Activated CD8-positive, alpha-beta T cell treated with anti-CD3 and anti-CD28 coated beads, Interleukin-2, amount 10 ng/mL, durations not matched to agents 7 days and 5 days (primary cell): ENCODE measurements at regions of chr14 and their contacts with region 1.

Region 1: DNA sequence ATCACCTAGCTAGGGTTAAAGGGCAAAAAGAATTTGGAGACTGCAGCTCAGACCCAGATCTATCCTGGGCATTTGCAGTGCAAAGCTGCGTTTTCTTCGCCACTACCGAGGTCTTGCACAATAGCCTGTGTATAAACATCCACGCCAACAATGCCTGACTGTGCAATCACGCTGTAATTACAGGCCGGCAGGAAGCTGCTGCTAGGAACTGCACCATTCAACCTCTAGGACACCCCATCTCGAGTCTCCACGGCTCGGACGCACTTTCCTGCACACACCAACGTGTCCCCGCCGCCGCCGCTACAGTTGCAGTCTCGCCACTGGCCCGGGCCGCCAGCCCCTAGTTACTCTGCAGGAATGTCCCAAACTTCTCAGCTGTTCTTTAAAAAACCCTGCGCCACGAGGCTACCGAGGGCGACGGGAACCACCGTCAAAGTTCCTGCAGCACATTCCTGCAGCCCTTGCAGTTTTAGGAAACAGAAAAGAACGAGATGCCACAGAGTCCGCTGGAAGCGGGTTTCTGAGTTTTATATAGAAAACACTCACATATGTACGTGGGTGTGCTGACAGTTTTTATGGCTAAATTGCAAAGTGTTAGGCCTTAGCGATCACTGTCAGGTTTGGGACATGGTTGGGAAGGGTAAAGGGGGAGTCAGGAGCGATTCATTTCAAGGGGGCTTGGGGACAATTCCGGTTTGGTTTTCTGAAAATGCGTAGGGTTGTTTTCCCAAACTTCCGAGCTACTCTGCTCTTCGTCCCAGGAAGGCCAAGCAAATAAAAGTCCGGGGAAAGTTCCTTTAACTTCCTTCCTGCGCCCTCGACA is 65.5 kb upstream of the PTGR2 start:
- DNase-seq: peak; percentile 83
- ATAC-seq: peak; percentile 68
- H3K4me3 Mint-ChIP-seq: peak overlapping the region; percentile 95
- H3K27ac Mint-ChIP-seq: peak overlapping the region; percentile 94
- H3K4me1 Mint-ChIP-seq: peaks cover 57% of the 10 kb centered on the region
- H3K27me3 Mint-ChIP-seq: no peaks in the 10 kb centered on the region

Region 2: GRCh38 chr14:73685328-73685727 is 100.8 kb before region 1 on chr14:
- CTCF ChIA-PET with region 1: no interaction called
- POLR2A ChIA-PET with region 1: no interaction called
- DNase-seq: no peak
- ATAC-seq: no peak
- H3K4me3 Mint-ChIP-seq: no peak overlapping the region
- H3K27ac Mint-ChIP-seq: no peak overlapping the region
- H3K4me1 Mint-ChIP-seq: no peaks in the 10 kb centered on the region
- H3K27me3 Mint-ChIP-seq: no peaks in the 10 kb centered on the region

Region 3: GRCh38 chr14:73696466-73697400 is 89.4 kb before region 1 on chr14:
- CTCF ChIA-PET with region 1: no interaction called
- POLR2A ChIA-PET with region 1: no interaction called
- DNase-seq: no peak
- ATAC-seq: peak; percentile 76
- H3K4me3 Mint-ChIP-seq: no peak overlapping the region
- H3K27ac Mint-ChIP-seq: no peak overlapping the region
- H3K4me1 Mint-ChIP-seq: peaks cover 15% of the 10 kb centered on the region
- H3K27me3 Mint-ChIP-seq: no peaks in the 10 kb centered on the region

Region 4: GRCh38 chr14:73753959-73754882 is 31.9 kb before region 1 on chr14:
- CTCF ChIA-PET with region 1: interaction called, 54 read pairs
- POLR2A ChIA-PET with region 1: interaction called, 177 read pairs
- DNase-seq: peak; percentile 73
- ATAC-seq: peak; percentile 42
- H3K4me3 Mint-ChIP-seq: peak overlapping the region; percentile 91
- H3K27ac Mint-ChIP-seq: peak overlapping the region; percentile 90
- H3K4me1 Mint-ChIP-seq: peaks cover 89% of the 10 kb centered on the region
- H3K27me3 Mint-ChIP-seq: no peaks in the 10 kb centered on the region

Region 5: DNA sequence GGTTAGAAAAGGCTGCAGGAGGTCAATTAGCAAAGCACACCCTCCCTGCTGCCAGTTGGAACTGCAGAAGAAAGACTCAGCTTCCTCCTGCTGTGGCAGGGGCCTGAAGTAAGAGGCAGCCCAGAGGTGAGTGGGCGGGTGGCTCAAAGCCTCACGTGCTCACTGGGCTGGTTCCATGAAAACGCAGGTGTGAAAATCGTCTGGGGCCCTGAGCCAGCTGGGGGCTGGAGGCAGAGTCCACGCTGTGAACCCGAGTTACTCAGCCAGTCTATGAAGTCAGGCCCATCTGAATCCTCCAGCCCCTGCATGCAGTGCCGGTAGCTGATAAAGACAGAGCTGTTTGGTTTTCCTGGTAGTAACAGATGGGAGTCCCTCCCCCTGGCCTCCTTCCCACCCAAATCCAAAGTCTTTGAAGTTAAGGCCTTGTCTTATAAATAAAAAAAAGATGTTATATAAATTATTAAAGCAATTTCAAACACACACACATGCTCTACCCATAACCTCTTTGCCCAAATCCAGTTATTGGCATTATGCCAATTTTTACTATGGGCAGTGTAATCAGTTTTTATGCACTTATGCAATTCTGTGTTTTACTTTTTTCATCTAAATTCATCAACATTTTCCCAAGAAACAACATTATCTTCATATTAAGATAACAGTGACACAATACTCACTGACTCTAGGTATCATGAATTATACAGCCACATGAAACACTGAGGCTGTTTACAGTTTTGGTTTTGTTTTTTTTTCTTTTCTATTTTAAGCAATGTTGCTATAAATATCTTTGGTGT is 14.0 kb before region 1 on chr14:
- CTCF ChIA-PET with region 1: interaction called, 36 read pairs
- POLR2A ChIA-PET with region 1: interaction called, 40 read pairs
- DNase-seq: peak; percentile 76
- ATAC-seq: peak; percentile 82
- H3K4me3 Mint-ChIP-seq: peak overlapping the region; percentile 34
- H3K27ac Mint-ChIP-seq: peak overlapping the region; percentile 77
- H3K4me1 Mint-ChIP-seq: peaks cover 71% of the 10 kb centered on the region
- H3K27me3 Mint-ChIP-seq: no peaks in the 10 kb centered on the region

Region 6: DNA sequence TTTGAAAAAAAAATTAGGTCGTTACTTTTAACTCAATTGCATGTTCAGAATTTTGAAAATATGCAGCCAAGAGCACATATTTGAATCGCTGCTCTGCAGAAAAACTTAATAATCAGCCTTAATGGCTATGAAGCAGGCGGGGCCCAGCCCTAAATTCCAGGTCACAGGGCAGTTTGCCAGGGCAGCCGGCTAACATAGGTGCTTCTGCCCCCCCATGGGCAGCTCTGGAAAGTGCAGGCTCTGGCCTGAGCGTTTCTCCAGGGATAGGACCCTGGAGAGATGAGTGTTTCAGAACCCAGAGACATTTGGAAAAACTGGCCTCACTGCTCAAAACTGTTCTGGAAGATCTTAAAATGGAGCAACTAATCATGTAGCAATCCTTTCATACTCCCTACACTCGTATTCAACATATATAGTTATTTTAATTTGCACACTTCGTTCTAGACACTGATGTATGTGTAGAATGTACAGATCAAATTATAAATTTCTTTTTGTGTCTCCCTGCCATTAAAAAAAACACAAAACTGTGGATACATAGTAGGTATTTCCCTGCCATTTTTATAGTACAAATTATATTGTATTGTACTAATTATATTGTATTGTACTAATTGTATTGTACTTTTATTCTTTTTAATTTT is 39.6 kb after region 1 on chr14:
- CTCF ChIA-PET with region 1: interaction called, 17 read pairs
- POLR2A ChIA-PET with region 1: interaction called, 7 read pairs
- DNase-seq: peak; percentile 77
- ATAC-seq: peak; percentile 91
- H3K4me3 Mint-ChIP-seq: no peak overlapping the region
- H3K27ac Mint-ChIP-seq: no peak overlapping the region
- H3K4me1 Mint-ChIP-seq: peaks cover 21% of the 10 kb centered on the region
- H3K27me3 Mint-ChIP-seq: peaks cover 3% of the 10 kb centered on the region

Region 7: GRCh38 chr14:73998726-73999125 is 212.6 kb after region 1 on chr14:
- CTCF ChIA-PET with region 1: no interaction called
- POLR2A ChIA-PET with region 1: no interaction called
- DNase-seq: no peak
- ATAC-seq: no peak
- H3K4me3 Mint-ChIP-seq: no peak overlapping the region
- H3K27ac Mint-ChIP-seq: no peak overlapping the region
- H3K4me1 Mint-ChIP-seq: no peaks in the 10 kb centered on the region
- H3K27me3 Mint-ChIP-seq: no peaks in the 10 kb centered on the region